ENCODE measurements at regions of chr5 and their contacts with region 1.

Region 1: DNA sequence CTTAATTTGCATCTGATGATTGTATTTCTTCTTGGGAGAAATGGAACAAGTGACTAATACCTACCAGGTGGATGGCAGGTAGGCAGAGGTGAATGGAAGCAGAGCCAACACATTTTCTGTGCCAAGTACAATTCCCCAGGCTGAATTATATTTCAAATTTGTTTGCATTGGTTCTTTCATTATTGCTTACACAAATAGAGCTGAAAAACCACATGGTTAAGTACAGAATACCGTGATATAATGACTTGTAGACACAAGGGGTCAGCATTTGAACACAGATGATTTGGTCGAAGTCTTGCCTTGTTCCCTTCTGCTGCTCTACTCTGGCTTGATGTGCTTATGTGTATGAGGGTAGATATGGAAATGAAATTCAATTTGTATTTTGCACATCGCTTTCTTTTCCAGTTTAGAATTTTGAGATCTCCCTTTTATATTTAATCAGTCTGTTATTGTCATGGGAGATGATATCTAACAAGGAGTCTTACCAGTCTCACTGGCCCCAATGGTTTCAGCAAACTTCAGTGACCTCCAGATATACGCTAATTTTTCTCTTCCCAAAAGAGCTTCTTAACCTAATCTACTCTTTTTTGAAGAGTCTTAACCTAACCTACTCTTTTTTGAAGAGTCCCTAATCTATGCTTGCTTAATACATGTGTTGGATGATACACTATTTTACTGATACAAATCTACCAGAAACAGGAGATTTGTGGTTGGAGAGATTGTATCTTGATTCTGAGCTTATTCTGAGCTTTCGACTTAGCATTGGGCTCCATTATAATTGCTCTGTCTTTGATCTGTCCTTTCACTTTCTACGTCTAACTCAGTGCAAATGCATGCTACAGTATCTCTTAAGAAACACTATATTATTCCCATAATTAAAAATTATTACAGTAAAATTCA is 88.1 kb downstream of the PCSK1 start:
- DNase-seq: peak; percentile 12
- ATAC-seq: peak; percentile 89
- H3K4me3 Mint-ChIP-seq: peak overlapping the region; percentile 15
- H3K27ac Mint-ChIP-seq: no peak overlapping the region
- H3K4me1 Mint-ChIP-seq: peaks cover 28% of the 10 kb centered on the region
- H3K27me3 Mint-ChIP-seq: peaks cover 10% of the 10 kb centered on the region

Region 2: DNA sequence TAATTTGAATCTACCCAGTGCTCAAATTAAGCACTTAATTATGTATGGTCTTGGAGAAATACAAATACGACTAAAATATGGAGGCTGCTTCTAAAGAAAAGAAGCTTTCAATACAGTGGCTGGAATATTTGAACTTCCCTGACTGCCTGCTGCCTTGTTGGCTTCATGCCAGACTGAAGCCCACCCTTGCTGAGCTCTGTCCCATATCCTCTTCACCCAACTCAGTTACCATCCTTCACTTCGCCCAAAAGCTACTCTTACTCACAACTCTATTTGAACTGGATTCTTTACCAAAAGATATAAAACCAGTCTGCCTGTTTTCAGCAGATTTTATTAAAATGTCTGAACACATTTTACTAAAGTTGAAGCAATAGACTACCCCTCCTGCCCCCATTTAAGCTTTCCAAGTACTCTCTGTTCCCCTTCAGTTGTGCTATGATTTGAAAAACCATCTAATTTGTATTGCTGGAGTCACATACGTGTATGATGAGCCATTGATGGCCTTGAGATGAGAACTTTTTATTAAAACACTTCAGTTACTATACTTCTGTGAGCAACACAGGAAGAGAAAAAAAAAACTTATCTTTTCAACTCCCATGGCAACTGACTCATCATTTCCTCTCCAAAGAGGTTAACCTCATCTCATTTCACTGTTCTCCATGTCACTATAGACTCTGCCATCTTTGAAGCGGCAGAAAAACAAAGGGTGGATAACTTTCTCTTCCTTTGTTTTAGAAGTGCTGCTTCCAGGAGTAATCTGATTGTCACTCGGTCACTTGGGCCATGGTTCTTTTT is 192.3 kb after region 1 on chr5:
- CTCF ChIA-PET with region 1: interaction called, 3 read pairs
- POLR2A ChIA-PET with region 1: no interaction called
- intact Hi-C with region 1: loop called in 1 of 2 experiments (anchors 1 kb)
- DNase-seq: no peak
- ATAC-seq: peak; percentile 86
- H3K4me3 Mint-ChIP-seq: peak overlapping the region; percentile 1
- H3K27ac Mint-ChIP-seq: peak overlapping the region; percentile 82
- H3K4me1 Mint-ChIP-seq: peaks cover 32% of the 10 kb centered on the region
- H3K27me3 Mint-ChIP-seq: no peaks in the 10 kb centered on the region

Region 3: GRCh38 chr5:96595300-96596090 is 250.6 kb after region 1 on chr5:
- CTCF ChIA-PET with region 1: interaction called, 58 read pairs
- POLR2A ChIA-PET with region 1: interaction called, 3 read pairs
- intact Hi-C with region 1: no loop called
- DNase-seq: peak; percentile 32
- ATAC-seq: peak; percentile 61
- H3K4me3 Mint-ChIP-seq: no peak overlapping the region
- H3K27ac Mint-ChIP-seq: no peak overlapping the region
- H3K4me1 Mint-ChIP-seq: peaks cover 17% of the 10 kb centered on the region
- H3K27me3 Mint-ChIP-seq: peaks cover 14% of the 10 kb centered on the region

Region 4: GRCh38 chr5:96601811-96602244 is 256.9 kb after region 1 on chr5:
- CTCF ChIA-PET with region 1: interaction called, 58 read pairs
- POLR2A ChIA-PET with region 1: interaction called, 3 read pairs
- intact Hi-C with region 1: loop called (anchors 1 kb)
- DNase-seq: peak; percentile 64
- ATAC-seq: peak; percentile 69
- H3K4me3 Mint-ChIP-seq: no peak overlapping the region
- H3K27ac Mint-ChIP-seq: no peak overlapping the region
- H3K4me1 Mint-ChIP-seq: peaks cover 15% of the 10 kb centered on the region
- H3K27me3 Mint-ChIP-seq: peaks cover 5% of the 10 kb centered on the region

Measured in activated CD4-positive, alpha-beta T cell treated with anti-CD3 and anti-CD28 coated beads for 36 hours (primary cell).